ENCODE measurements at regions of chr16 and their contacts with region 1.

Region 1: GRCh38 chr16:68244903-68245853 is at the start of gene PLA2G15:
- DNase-seq: peak; percentile 93
- H3K4me3 Mint-ChIP-seq: peak within 1 kb of the TSS; percentile 99
- H3K27ac Mint-ChIP-seq: peak within 1 kb of the TSS; percentile 82
- H3K4me1 Mint-ChIP-seq: peaks cover 18% of the 10 kb centered on the region
- H3K27me3 Mint-ChIP-seq: peaks cover 5% of the 10 kb centered on the region
- total RNA-seq, gene PLA2G15: 8.6 and 8.8 TPM in 2 replicates

Region 2: GRCh38 chr16:68328151-68328859 is 83.1 kb after region 1 on chr16:
- intact Hi-C with region 1: loop called (anchors 1 kb)
- DNase-seq: peak; percentile 73
- H3K4me3 Mint-ChIP-seq: no peak overlapping the region
- H3K27ac Mint-ChIP-seq: no peak overlapping the region
- H3K4me1 Mint-ChIP-seq: peaks cover 41% of the 10 kb centered on the region
- H3K27me3 Mint-ChIP-seq: no peaks in the 10 kb centered on the region

Measured in activated T-helper 1 cell treated with anti-CD3 and anti-CD28 coated beads, Interleukin-12 subunit alpha, Interleukin-12 subunit beta, Interleukin-2, Interleukin-4 antibody, amounts not matched to agents 30 ng/mL and 10 ng/mL and 1 ng/mL, durations not matched to agents 14 hours and 24 hours and 36 hours (primary cell).